ENCODE measurements at regions of chr11 and their contacts with region 1.

Region 1: DNA sequence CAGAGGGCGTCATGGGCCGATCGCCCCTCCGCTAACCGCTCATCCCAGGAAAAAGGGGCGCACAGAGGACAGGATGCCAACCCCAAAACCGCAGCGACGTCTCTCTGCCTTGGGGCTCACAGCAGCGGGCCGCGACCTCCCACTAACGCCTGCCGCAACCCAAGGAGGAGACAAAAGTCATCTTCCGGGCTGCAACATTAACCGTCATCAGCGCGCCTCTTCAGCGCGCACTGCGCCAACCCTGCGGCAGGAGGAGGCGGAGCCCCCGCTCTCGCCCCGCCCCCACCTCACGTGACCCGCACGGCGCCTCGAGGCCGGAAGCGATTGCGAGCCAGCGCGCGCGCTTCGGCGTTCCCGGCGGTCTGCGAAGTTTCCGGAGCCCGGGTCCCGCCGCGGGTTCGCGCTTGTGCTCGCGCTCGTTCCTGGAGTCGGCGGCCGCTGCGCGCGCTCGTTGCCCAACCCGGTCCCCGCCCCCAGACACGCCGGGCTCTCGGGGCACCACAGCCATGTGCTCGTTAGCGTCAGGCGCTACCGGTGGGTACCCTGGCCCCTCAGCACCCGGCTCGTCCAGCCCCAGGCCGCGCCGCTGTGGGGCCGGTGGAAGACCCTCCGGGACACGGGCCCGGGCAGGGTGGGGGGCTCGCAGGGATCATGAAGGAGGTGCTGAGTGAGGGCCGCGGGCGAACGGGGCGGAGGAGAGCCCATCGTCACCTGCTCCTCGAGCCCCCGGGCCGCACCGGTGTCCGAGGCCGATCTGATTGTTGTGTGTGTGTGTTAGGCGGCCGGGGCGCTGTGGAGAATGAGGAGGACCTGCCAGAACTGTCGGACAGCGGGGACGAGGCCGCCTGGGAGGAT is at the start of gene PRMT3:
- DNase-seq: peak; percentile 95
- ATAC-seq: peak; percentile 78
- H3K4me3 ChIP-seq: peak within 1 kb of the TSS; percentile 80
- H3K27ac ChIP-seq: peak within 1 kb of the TSS; percentile 68
- H3K4me1 ChIP-seq: peaks cover 8% of the 10 kb centered on the region
- H3K27me3 ChIP-seq: no peaks in the 10 kb centered on the region
- CTCF ChIP-seq: peak; percentile 93
- total RNA-seq, gene PRMT3: 43.7 and 50.3 TPM in 2 replicates

Region 2: DNA sequence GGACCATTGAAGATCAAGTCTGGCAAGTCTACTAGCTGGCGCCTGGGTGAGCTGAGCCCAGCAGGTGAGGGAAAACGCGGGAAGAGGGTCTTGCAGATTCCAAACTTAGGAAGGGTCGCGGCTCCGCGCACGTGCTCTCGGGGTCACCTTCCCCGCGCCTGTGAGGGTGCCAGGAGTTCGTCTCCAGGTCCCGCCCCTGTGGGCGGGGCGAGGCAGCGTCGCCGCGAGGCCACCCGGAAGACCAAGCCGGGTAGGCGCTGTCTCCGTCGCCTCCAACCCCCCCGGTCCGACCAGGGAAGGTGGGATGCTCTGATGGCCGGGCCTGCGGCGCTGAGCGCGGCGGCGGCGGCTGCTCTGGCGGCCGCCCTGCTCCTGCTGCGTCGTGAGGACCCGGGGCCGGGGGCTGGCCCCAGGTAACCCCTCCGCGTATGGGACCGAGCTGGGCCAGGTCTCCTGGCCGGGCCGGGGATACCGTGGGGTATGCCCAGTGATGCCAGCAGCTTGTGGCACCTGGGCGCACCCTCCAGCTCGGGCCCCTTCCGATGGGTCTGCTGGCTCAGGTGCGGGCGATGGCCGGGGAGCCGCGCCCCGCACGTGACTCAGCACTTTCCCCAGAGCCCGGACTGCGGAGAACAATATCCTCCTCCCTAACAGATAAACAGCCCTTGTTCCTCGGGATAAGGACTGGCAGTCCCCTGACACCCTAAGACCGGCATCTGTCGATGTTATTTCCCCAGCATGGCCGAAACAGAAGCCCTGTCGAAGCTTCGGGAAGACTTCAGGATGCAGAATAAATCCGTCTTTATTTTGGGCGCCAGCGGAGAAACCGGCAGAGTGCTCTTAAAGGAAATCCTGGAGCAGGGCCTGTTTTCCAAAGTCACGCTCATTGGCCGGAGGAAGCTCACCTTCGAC is 23.7 kb before region 1 on chr11 and contains the start of gene HTATIP2:
- CTCF ChIA-PET with region 1: interaction called, 3 read pairs
- POLR2A ChIA-PET with region 1: no interaction called
- intact Hi-C with region 1: loop called (anchors 1 kb)
- DNase-seq: peak; percentile 54
- ATAC-seq: peak; percentile 57
- H3K4me3 ChIP-seq: peak within 1 kb of the TSS; percentile 67
- H3K27ac ChIP-seq: peak within 1 kb of the TSS; percentile 89
- H3K4me1 ChIP-seq: peaks cover 60% of the 10 kb centered on the region
- H3K27me3 ChIP-seq: no peaks in the 10 kb centered on the region
- CTCF ChIP-seq: no peak
- total RNA-seq, gene HTATIP2: 39.7 and 48.3 TPM in 2 replicates

Measured in PC-3 (cell line).